ENCODE measurements at regions of chr4 and their contacts with region 1.

Region 1: GRCh38 chr4:121370729-121371325 is 10.0 kb downstream of the QRFPR start:
- DNase-seq: peak; percentile 62
- H3K4me3 ChIP-seq: no peak overlapping the region
- H3K27ac ChIP-seq: no peak overlapping the region
- H3K4me1 ChIP-seq: peaks cover 33% of the 10 kb centered on the region
- H3K27me3 ChIP-seq: no peaks in the 10 kb centered on the region
- CTCF ChIP-seq: peak; percentile 79

Region 2: DNA sequence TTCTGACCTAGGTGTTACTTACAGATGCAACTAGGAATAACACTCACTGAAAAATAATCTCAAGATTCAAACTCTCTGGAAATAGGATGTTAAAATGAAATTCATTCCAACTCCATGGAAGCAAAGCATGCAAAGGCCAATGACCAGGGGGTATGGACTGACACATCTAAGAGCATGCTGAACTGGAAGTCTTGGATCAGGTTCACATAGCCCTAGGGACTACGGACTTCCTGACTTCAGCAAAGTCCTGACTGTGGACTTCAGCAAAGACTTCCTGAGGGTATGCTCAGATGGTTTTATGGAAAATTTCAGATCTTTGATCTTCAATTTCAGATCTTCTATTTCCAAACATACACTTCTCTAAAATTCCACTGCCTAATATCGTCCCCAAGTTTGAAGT is 36.8 kb before region 1 on chr4:
- CTCF ChIA-PET with region 1: no interaction called
- POLR2A ChIA-PET with region 1: no interaction called
- intact Hi-C with region 1: loop called (anchors 2 kb)
- DNase-seq: no peak
- H3K4me3 ChIP-seq: no peak overlapping the region
- H3K27ac ChIP-seq: peak overlapping the region; percentile 8
- H3K4me1 ChIP-seq: peaks cover 19% of the 10 kb centered on the region
- H3K27me3 ChIP-seq: no peaks in the 10 kb centered on the region
- CTCF ChIP-seq: no peak

Region 3: DNA sequence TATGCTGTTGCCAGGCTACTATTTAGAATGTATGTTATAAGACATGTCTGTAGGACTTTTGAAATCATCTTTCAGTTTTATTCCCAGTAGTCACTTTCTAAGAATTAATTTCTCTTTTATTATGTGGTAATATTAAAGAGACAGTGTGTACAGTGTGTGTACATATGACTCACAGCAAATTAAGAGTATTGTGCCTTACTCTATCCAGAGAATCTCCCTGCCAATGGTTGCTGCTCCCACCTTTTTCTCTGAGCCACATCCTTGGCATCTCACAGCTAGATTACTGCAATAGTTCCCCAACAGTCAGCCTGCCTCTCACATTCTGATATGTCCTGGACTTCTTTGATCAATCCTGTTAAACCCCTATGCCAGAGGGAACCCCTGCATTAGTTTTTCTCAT is 211.5 kb after region 1 on chr4:
- CTCF ChIA-PET with region 1: no interaction called
- POLR2A ChIA-PET with region 1: no interaction called
- intact Hi-C with region 1: loop called (anchors 5 kb)
- DNase-seq: peak; percentile 39
- H3K4me3 ChIP-seq: no peak overlapping the region
- H3K27ac ChIP-seq: peak overlapping the region; percentile 76
- H3K4me1 ChIP-seq: peaks cover 47% of the 10 kb centered on the region
- H3K27me3 ChIP-seq: no peaks in the 10 kb centered on the region
- CTCF ChIP-seq: no peak

Region 4: GRCh38 chr4:121656269-121656641 is 285.4 kb after region 1 on chr4:
- CTCF ChIA-PET with region 1: no interaction called
- POLR2A ChIA-PET with region 1: no interaction called
- intact Hi-C with region 1: loop called (anchors 2 kb)
- DNase-seq: peak; percentile 79
- H3K4me3 ChIP-seq: no peak overlapping the region
- H3K27ac ChIP-seq: no peak overlapping the region
- H3K4me1 ChIP-seq: peaks cover 10% of the 10 kb centered on the region
- H3K27me3 ChIP-seq: no peaks in the 10 kb centered on the region
- CTCF ChIP-seq: peak; percentile 69

Region 5: GRCh38 chr4:121726642-121727268 is 355.9 kb after region 1 on chr4:
- CTCF ChIA-PET with region 1: no interaction called
- POLR2A ChIA-PET with region 1: no interaction called
- intact Hi-C with region 1: loop called (anchors 5 kb)
- DNase-seq: peak; percentile 76
- H3K4me3 ChIP-seq: no peak overlapping the region
- H3K27ac ChIP-seq: no peak overlapping the region
- H3K4me1 ChIP-seq: no peaks in the 10 kb centered on the region
- H3K27me3 ChIP-seq: no peaks in the 10 kb centered on the region
- CTCF ChIP-seq: peak; percentile 76

Measured in A673 (cell line).